Spleen (tissue), 13 donors: ENCODE measurements at regions of chr3 and their contacts with region 1.

Region 1: DNA sequence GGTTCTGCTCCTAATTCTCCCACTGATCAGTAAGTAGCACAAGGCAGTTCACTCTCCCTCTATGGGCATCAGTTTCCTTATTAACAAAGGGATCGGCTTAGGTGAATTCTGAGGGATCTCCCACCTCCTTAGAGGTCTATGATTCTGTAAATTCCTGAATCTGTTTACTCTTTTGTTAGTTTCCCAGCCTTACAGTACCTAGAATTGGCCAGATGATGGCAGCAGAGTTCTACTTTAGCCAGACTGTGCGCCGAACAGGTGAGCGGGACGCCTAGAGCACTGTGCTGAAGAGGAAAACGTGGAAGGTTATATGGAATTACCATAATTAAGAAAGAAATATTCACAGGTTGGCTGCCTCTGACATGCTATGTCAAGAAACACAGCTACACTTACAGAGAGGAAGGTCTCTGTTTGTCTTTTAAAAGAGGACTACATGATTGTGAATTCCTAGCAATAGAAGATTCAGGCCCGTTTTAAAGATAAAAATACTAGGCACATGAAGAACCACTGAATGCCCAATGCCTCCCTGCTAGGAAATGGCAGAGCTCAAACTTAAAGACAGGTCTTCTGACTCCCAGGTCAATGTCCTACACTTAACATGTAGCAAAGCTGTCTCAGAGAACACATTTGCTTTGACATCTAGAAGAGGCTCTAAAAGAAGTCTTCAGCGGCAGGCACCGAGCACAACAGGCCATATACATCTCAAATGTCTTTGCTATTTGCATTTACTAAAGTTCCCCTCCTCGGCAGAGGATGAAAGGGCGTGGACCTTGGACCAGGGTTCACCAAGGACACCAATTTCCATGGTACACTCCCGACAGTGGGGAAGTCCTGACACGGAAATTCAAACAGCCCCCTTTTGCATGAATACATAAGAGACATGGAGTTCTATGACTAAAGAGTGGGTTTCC is 259.9 kb downstream of the FGF12 start:
- DNase-seq: peak; percentile 66
- H3K4me3 ChIP-seq: no peak overlapping the region
- H3K27ac ChIP-seq: no peak overlapping the region
- H3K4me1 ChIP-seq: peaks cover 0 to 7% (median 5%) of the 10 kb centered on the region in 6 donors
- H3K27me3 ChIP-seq: peaks cover 0 to 17% (median 0%) of the 10 kb centered on the region in 7 donors
- CTCF ChIP-seq: peak; percentile 62 to 86 (median 77)
- POLR2A ChIP-seq: no peak

Region 2: DNA sequence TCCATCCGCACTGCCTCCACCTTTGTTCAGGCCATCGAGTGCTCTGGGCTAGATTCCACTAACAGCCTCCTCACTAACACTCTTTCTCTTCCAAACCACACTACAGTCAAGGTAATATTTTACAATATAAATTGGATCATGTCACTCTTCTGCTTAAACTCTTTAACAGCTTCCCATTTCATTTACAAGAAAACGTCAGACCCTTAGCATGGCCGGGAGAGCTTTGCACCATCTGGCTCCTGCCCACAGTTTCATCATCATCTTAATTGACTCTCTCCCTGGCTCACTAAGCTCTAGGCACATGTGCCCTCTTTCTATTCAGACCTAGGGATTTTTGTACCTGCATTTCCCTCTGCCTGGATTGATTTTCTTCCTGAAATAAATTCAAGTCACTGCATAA is 94.9 kb before region 1 on chr3:
- intact Hi-C with region 1: no loop called
- DNase-seq: no peak
- H3K4me3 ChIP-seq: no peak overlapping the region
- H3K27ac ChIP-seq: no peak overlapping the region
- H3K4me1 ChIP-seq: peaks cover 0 to 4% (median 0%) of the 10 kb centered on the region in 6 donors
- H3K27me3 ChIP-seq: no peaks in the 10 kb centered on the region
- CTCF ChIP-seq: no peak
- POLR2A ChIP-seq: no peak

Region 3: GRCh38 chr3:192802957-192803899 is 335.7 kb after region 1 on chr3:
- intact Hi-C with region 1: loop called (anchors 5 kb)
- DNase-seq: no peak
- H3K4me3 ChIP-seq: no peak overlapping the region
- H3K27ac ChIP-seq: no peak overlapping the region
- H3K4me1 ChIP-seq: no peaks in the 10 kb centered on the region
- H3K27me3 ChIP-seq: no peaks in the 10 kb centered on the region
- CTCF ChIP-seq: peak in 9 of 11 experiments; percentile 12 to 58 (median 40)
- POLR2A ChIP-seq: no peak